Activated naive CD4-positive, alpha-beta T cell treated with anti-CD3 and anti-CD28 coated beads for 36 hours (primary cell): ENCODE measurements at regions of chr9 and their contacts with region 1.

Region 1: GRCh38 chr9:89984214-89984613 is 379.4 kb downstream of the GADD45G start:
- DNase-seq: no peak
- H3K4me3 Mint-ChIP-seq: peak overlapping the region; percentile 33
- H3K27ac Mint-ChIP-seq: peak overlapping the region; percentile 88
- H3K4me1 Mint-ChIP-seq: peaks cover 49% of the 10 kb centered on the region
- H3K27me3 Mint-ChIP-seq: peaks cover 17% of the 10 kb centered on the region

Region 2: DNA sequence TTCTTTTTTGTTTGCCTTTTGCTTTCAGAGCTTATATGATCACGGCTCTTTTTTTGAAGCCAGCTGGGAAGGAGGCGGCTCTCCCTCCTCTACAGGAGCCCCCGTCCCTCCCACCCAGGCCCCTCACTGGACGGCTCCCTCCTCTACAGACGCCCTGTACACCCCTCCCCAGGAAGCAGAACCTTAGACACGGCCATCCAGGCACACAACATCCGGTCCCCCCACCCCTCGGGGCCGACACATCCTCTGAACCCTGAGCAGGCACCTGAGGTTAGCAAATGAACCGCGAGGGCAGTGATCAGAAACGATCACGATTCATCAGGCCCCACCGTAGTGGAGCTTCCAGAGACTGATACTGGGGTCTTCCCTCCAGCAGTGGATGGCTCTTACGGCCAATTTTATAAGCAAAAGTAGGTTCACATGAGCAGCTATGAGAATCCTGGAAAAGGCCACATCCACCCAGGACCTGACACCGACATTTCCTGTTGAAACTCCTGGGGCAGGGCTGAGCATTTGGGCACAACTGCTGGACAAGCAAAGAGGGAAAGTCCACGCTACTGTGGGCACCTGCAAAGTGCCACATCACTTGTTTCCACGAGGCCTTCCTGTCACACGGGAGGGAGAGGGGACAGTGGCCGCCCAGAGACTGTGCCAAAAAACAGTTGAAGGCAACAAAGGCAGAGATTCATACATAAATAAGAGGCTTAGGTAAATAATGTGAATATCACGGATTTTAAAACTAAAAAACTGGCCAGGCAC is 565.2 kb before region 1 on chr9:
- CTCF ChIA-PET with region 1: no interaction called
- intact Hi-C with region 1: loop called (anchors 5 kb)
- DNase-seq: peak; percentile 82
- H3K4me3 Mint-ChIP-seq: peak overlapping the region; percentile 53
- H3K27ac Mint-ChIP-seq: peak overlapping the region; percentile 98
- H3K4me1 Mint-ChIP-seq: peaks cover 89% of the 10 kb centered on the region
- H3K27me3 Mint-ChIP-seq: no peaks in the 10 kb centered on the region

Region 3: GRCh38 chr9:89743573-89744361 is 240.4 kb before region 1 on chr9:
- CTCF ChIA-PET with region 1: no interaction called
- intact Hi-C with region 1: loop called (anchors 5 kb)
- DNase-seq: peak; percentile 69
- H3K4me3 Mint-ChIP-seq: no peak overlapping the region
- H3K27ac Mint-ChIP-seq: peak overlapping the region; percentile 85
- H3K4me1 Mint-ChIP-seq: peaks cover 70% of the 10 kb centered on the region
- H3K27me3 Mint-ChIP-seq: no peaks in the 10 kb centered on the region

Region 4: DNA sequence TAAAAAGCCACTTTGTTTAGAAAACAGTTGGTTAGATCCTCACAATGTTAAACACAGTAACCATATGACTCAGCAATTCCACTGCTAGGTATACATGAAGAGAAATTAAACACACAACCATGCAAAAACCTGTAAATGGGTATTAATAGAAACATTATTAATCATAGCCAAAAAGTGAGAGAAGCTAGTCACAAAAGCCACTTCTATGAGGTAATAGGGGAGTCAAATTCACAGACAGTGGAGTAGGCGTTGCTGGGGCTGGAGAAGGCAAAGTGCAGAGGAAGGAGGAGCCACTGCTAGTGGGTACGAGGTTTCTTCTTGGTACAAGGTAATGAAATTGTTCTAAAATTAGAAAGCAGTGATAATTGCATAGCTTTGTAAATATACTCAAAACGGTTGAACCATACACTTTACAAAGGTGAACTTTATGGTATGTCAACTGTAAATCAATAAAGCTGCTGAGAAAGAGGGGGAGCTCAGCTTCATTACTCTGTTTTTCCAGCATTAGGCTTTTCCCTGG is 15.0 kb before region 1 on chr9:
- CTCF ChIA-PET with region 1: interaction called, 4 read pairs
- intact Hi-C with region 1: loop called (anchors 1 kb)
- DNase-seq: peak; percentile 57
- H3K4me3 Mint-ChIP-seq: no peak overlapping the region
- H3K27ac Mint-ChIP-seq: no peak overlapping the region
- H3K4me1 Mint-ChIP-seq: peaks cover 37% of the 10 kb centered on the region
- H3K27me3 Mint-ChIP-seq: no peaks in the 10 kb centered on the region

Region 5: DNA sequence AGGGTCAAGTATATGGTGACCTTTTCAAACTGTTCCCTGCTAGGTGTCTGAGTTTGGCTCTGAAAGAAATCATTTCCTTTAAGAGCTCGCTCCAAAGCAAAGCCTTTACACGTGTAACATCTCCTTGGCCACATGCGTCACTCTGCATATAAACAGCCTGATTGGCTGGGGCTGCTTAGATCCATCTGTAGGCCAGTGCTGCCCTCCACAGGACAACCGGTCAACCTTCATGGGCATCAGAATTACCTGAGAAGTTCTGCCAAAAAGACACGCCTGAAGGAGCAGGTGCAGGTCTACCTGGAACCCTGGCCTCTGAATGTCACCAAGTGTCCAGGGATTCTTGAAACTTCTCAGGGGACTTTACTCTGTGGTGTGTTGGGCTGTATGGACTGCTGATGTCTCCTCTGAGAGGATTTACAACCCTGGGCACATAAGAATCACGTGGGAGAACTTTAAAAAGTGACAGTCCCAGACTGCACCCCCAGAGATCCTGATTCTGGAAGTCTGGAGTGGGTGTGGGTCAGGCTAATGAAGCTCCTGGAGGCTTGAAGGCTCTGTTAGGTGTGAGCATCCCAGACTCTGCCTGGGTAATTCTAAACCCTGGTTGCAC is 118.2 kb after region 1 on chr9:
- CTCF ChIA-PET with region 1: interaction called, 3 read pairs
- intact Hi-C with region 1: loop called (anchors 5 kb)
- DNase-seq: peak; percentile 91
- H3K4me3 Mint-ChIP-seq: no peak overlapping the region
- H3K27ac Mint-ChIP-seq: no peak overlapping the region
- H3K4me1 Mint-ChIP-seq: peaks cover 3% of the 10 kb centered on the region
- H3K27me3 Mint-ChIP-seq: peaks cover 2% of the 10 kb centered on the region